ENCODE measurements at regions of chr15 and their contacts with region 1.

Region 1: GRCh38 chr15:42059661-42060476 is 34.5 kb downstream of the PLA2G4D start:
- DNase-seq: peak; percentile 60 to 66
- H3K4me3 ChIP-seq: no peak overlapping the region
- H3K27ac ChIP-seq: peak overlapping the region in 1 of 3 donors; percentile 56
- H3K4me1 ChIP-seq: peaks cover 5 to 29% of the 10 kb centered on the region in 2 donors
- H3K27me3 ChIP-seq: no peaks in the 10 kb centered on the region
- CTCF ChIP-seq: peak; percentile 83 to 91 (median 88)
- POLR2A ChIP-seq: no peak

Region 2: DNA sequence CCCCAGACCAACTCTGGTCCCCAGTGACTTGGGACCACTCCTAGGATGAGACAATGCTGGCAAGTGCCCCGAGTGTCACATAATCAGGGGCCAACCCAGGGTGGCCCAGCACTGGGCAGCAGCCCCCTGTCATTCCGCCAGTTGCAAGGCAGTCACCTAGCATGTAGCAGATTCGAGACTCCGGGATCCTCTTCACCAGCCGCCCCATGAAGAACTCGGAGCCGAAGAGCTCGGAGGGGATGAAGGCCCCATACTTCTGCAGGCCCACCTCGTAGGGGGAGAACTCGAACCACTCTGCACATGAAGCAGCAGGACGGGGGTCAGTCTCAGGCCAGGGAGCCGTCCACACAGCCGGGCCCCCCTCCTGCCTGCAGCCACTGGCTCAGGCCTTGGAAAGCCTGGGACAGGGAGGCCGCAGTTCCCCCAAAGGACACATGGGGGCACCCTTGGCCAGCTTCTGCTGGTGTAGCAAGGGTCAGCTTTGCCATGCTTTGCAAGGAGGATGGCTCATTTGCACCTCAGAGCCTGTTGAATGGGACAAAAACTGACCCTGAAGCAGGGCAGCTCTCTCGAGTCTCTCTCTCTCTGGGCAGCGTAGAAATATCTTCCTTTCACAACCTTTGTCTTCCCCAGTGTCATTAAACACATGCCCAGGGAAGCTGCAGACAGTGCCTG is 70.5 kb before region 1 on chr15:
- intact Hi-C with region 1: loop called (anchors 5 kb)
- DNase-seq: peak; percentile 84 to 86
- H3K4me3 ChIP-seq: no peak overlapping the region
- H3K27ac ChIP-seq: no peak overlapping the region
- H3K4me1 ChIP-seq: peaks cover 17 to 20% of the 10 kb centered on the region in 2 donors
- H3K27me3 ChIP-seq: no peaks in the 10 kb centered on the region
- CTCF ChIP-seq: peak; percentile 96 to 100 (median 98)
- POLR2A ChIP-seq: no peak